ENCODE measurements at regions of chr4 and their contacts with region 1.

Region 1: GRCh38 chr4:163544407-163545038 is 50.0 kb downstream of the TMA16 start:
- DNase-seq: peak; percentile 74
- ATAC-seq: peak; percentile 89

Region 2: DNA sequence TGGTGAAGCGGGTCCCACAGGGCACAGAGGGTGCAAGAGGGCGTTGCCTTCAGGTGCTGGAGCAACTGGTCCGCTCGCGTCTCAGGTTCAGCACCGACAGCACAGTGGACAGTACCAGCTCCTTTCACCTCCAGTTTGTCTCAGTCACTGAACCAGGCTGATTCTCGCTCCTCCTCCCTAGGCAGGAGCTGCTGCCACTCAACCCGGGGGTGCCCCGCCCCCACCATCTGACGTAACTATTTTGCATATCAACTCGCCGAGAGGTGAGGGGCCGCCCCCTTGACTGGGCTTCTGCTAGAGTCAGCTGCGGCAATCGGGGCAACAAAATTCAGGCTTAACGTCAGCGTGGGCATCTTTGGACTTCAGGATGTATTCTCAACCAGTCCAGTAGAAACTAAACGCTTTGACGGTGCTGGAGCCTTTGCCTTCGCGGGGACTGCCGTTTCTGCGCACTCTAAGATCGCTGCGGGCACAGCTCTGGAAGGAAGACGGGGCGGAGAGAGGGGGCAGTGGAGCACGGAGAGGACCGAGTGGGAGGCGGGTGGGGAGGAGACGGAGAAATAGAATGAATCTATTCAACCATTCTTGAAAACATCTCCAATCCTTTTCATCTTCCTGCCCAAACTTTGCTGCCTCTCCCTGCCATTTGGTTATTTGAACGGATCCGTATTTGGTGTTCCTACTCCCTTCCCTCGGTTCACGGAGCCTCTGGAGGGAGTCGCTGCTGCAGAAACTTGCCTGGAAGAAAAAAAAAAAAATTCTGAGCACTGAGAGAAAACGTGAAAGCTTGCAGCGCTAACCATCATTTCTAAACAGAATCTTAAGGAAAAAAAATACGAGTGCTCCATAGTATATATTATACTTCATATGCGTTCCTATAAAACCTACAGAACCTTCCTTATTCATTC is 1380.4 kb before region 1 on chr4 and contains the start of gene FSTL5:
- intact Hi-C with region 1: no loop called
- DNase-seq: peak; percentile 84
- ATAC-seq: peak; percentile 90
- total RNA-seq, gene FSTL5: 12.3 TPM

Region 3: GRCh38 chr4:163494360-163495162 is 50.0 kb before region 1 on chr4 and contains the start of gene TMA16:
- intact Hi-C with region 1: loop called (anchors 10 kb)
- DNase-seq: peak; percentile 88
- ATAC-seq: peak; percentile 96
- total RNA-seq, gene TMA16: 28.0 TPM